Activated naive CD4-positive, alpha-beta T cell treated with anti-CD3 and anti-CD28 coated beads for 36 hours (primary cell): ENCODE measurements at regions of chr12 and their contacts with region 1.

Region 1: GRCh38 chr12:104381731-104382480 is 74.8 kb upstream of the CHST11 start:
- DNase-seq: peak; percentile 91
- H3K4me3 Mint-ChIP-seq: no peak overlapping the region
- H3K27ac Mint-ChIP-seq: no peak overlapping the region
- H3K4me1 Mint-ChIP-seq: peaks cover 10% of the 10 kb centered on the region
- H3K27me3 Mint-ChIP-seq: no peaks in the 10 kb centered on the region

Region 2: GRCh38 chr12:103475073-103475472 is 906.8 kb before region 1 on chr12:
- CTCF ChIA-PET with region 1: no interaction called
- intact Hi-C with region 1: no loop called
- DNase-seq: no peak
- H3K4me3 Mint-ChIP-seq: no peak overlapping the region
- H3K27ac Mint-ChIP-seq: no peak overlapping the region
- H3K4me1 Mint-ChIP-seq: peaks cover 4% of the 10 kb centered on the region
- H3K27me3 Mint-ChIP-seq: no peaks in the 10 kb centered on the region

Region 3: DNA sequence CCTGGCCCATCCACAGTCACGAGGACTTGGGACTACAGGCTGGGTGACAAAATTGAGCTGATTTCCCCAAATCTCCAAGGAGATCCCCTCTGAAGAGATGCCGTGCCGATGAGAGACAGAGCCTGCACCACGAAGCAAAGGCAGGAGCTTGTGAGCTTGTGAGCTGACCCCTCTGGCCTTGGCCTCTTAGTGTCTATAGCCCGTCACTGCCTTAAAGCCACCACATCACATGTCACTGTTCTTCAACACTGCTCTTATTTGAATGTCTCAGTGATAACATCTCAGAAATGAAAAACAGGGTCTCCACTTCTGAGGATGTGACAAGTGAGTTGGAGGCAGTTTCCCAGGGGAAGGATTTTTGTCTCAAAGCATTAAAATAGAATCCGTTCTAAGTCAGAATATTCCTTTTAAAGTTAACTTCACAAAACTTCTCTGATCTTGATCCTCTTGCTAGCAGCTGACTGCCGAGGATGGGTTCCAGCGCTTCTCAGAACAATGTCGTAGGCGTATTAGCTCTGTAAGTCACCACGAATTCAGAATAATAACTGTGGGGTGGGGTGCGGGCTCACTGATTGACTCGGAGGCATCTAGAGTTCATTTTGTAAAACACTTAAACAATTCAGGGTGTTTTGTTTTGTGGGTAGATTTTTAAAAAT is 112.4 kb after region 1 on chr12:
- CTCF ChIA-PET with region 1: interaction called, 6 read pairs
- intact Hi-C with region 1: loop called (anchors 5 kb)
- DNase-seq: peak; percentile 85
- H3K4me3 Mint-ChIP-seq: peak overlapping the region; percentile 52
- H3K27ac Mint-ChIP-seq: peak overlapping the region; percentile 70
- H3K4me1 Mint-ChIP-seq: peaks cover 82% of the 10 kb centered on the region
- H3K27me3 Mint-ChIP-seq: no peaks in the 10 kb centered on the region

Region 4: GRCh38 chr12:104578453-104578852 is 196.5 kb after region 1 on chr12:
- CTCF ChIA-PET with region 1: interaction called, 11 read pairs
- intact Hi-C with region 1: no loop called
- DNase-seq: peak; percentile 36
- H3K4me3 Mint-ChIP-seq: no peak overlapping the region
- H3K27ac Mint-ChIP-seq: no peak overlapping the region
- H3K4me1 Mint-ChIP-seq: peaks cover 63% of the 10 kb centered on the region
- H3K27me3 Mint-ChIP-seq: no peaks in the 10 kb centered on the region

Region 5: GRCh38 chr12:104623883-104624551 is 242.1 kb after region 1 on chr12:
- CTCF ChIA-PET with region 1: no interaction called
- intact Hi-C with region 1: no loop called
- DNase-seq: no peak
- H3K4me3 Mint-ChIP-seq: no peak overlapping the region
- H3K27ac Mint-ChIP-seq: no peak overlapping the region
- H3K4me1 Mint-ChIP-seq: peaks cover 12% of the 10 kb centered on the region
- H3K27me3 Mint-ChIP-seq: no peaks in the 10 kb centered on the region

Region 6: GRCh38 chr12:104877123-104877705 is 495.3 kb after region 1 on chr12:
- CTCF ChIA-PET with region 1: interaction called, 7 read pairs
- intact Hi-C with region 1: loop called (anchors 1 kb)
- DNase-seq: peak; percentile 59
- H3K4me3 Mint-ChIP-seq: no peak overlapping the region
- H3K27ac Mint-ChIP-seq: no peak overlapping the region
- H3K4me1 Mint-ChIP-seq: peaks cover 3% of the 10 kb centered on the region
- H3K27me3 Mint-ChIP-seq: peaks cover 2% of the 10 kb centered on the region

Region 7: DNA sequence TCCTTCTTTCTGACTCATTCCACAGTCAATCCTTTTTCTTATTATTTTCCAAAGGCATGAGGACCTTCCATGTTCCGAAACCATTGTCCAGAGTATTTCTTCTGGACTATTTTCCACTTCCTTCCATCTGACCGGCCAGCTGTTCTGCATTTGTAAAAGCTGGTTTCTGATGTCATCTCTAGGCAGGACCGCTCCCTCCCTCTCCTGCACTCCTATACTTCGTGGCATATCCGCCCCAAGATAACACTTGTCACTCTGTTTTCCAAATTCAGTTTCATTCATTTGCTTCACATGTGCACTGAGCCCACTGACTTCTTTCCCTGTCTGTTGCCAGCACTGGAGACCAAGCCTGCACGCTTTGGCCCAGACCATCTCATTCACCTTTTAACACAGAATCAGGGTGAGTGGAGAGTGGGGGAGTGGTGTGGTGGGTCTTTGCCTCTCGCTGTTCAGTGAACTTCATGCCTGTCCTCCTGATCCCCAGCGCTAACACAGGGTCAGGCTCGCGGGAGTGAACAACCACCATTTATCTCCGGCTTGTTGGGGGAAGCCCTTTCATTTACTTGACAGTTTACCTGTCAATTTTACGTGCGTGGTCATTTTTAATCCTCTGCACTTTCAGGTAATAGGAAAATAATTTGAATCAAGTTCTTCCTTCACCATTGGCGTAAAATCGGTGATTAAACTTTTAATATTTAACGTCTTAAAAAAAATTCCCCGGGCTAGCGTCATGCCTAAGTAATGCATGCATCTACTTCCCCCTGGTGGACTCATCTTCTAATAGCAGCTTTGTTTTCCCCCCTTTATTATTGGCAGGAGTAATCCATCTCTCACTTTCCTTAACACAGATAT is 1001.1 kb after region 1 on chr12:
- CTCF ChIA-PET with region 1: no interaction called
- intact Hi-C with region 1: loop called (anchors 1 kb)
- DNase-seq: peak; percentile 31
- H3K4me3 Mint-ChIP-seq: no peak overlapping the region
- H3K27ac Mint-ChIP-seq: no peak overlapping the region
- H3K4me1 Mint-ChIP-seq: no peaks in the 10 kb centered on the region
- H3K27me3 Mint-ChIP-seq: no peaks in the 10 kb centered on the region